ENCODE measurements at regions of chr22 and their contacts with region 1.

Region 1: DNA sequence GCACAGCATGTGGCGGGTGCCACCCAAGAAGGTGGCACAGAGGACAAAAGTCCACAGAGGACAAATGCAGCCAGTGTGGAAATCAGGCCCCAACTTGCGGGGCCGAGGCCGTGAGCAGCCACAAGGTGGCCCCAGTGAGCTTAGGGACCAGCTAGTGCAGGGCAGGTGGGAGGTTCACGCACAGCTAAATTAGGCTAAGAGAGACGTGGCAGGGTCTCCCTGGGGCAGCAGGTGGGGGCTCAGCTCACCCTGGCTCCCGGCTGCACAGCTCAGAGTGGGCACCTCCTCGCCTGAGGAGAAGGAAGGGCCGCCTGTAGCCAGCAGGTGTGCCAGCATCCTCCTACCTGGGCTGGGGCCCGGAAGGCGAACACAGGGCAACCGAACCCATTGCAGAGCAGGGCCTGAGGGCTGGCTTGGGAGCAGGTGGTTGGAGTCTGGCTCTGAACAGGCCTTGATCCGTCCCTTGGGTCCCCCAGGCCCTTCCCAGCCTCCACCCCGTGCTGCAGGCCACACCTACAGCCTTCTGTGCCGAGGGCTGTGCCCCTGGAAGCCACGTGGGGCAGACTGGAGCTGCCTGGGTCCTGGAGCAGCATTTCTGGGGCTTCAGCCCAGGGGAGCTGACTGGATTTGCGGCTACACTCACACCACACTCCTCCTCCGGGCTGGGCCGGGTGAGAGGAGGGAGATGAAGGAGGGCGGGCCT is 26.1 kb upstream of the CELSR1 start:
- DNase-seq: peak; percentile 81

Region 2: DNA sequence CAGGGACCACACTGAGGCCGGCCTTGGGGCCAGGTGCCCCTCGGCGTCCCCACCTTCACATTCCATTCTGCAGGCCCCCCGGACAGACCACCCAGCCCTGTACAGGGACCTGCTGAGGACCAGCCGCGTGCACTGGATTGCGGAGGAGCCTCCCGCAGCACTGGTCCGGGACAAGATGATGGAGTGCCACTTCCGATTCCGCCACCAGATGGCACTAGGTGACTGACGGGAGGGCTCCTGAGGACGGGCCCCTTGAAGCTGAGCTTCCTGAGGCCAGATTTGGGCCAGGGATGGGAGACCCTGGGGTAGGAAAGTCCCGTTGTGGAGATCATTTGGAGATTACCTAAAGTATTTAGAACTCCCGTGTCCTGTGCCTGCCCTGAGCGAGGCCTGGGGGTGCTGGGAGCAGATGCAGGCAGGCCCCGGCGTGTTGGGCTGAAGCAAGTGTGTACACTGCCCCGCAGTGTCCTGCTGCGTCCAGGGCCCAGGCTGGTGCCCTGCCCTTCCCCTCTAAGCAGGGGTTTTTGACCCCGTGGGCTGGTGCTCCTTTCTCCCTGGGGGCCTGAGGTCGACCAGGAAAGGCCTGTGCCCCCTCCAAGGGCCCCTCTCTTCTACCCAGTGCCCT is 208.0 kb before region 1 on chr22:
- CTCF ChIA-PET with region 1: no interaction called
- POLR2A ChIA-PET with region 1: no interaction called
- DNase-seq: peak; percentile 84

Region 3: GRCh38 chr22:46538814-46539160 is 24.7 kb before region 1 on chr22:
- CTCF ChIA-PET with region 1: no interaction called
- POLR2A ChIA-PET with region 1: no interaction called
- DNase-seq: no peak

Region 4: DNA sequence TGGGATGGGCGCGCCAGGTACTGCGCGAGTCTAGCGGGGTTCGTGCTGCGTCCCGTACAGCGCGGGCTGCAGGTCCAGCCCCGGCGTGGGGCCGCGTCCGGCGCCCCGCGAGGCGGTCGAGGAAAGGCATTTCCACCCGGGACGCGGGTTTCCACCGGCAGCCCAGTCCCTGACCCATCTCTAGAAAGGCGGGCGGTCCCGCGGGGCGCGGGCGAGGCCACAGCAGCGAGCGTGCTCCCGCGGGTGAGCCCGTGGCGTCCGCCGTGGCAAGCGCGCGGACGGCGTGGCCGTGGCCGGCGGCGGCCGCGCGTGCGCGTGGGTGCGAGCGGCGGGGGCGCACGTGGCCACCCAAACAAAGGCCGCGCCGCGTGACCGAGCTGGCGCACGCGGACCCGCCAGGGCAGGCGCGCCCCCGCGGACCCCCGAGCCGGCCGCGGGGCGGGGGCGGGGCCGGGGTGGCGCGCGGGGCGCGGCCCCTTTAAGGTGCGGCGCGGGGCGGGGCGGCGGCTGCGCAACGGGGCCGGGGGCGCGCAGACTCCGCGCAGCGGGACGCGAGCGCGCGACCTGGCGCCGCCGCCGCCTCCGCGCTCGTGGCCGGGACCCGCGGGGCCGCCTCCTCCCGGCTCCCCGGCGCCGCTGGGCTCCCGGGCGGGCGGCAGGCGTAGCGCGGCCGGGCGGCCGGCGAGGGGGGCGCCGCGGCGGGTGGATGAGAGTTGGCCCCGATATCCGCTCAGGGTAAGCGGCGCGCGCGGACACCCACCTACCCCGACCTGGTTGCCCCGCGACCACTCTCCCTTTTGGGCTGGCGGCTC is 13.2 kb after region 1 on chr22:
- CTCF ChIA-PET with region 1: interaction called, 12 read pairs
- POLR2A ChIA-PET with region 1: interaction called, 3 read pairs
- DNase-seq: peak; percentile 82

Region 5: DNA sequence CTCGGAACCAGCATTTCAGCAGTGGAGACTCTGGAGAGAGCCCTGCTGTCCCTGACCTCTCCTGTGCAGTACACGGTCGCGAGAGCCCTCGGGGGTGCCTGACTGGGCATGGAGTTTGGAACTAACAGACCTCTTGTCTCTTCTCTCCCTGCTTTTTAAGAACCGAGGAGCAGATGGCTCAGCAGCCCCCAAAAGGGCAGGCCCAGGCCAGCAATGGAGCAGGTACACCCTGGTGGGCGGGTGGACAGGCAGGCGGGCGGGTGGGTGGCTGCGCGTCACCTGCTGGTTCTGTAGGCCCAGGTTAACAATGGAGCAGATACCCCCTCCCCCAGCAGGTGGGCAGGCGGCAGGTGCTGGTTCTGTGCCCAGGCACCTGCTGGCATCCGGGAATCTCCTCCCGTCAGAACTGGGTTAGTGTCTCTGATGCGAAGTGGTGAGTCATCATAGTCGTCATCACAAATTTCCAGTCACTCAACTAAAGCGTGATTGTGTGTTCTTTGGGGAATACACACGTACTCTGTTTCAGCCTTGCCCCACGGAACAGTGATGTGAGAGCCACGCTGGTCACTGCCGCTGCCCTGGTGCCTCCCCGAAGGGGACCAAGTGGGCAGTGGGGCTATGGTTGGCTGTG is 97.8 kb after region 1 on chr22:
- CTCF ChIA-PET with region 1: no interaction called
- POLR2A ChIA-PET with region 1: no interaction called
- DNase-seq: no peak

Measured in HEK293T (cell line).